ENCODE measurements at regions of chr20 and their contacts with region 1.

Region 1: GRCh38 chr20:32277361-32278198 is at the start of gene KIF3B:
- DNase-seq: peak; percentile 94
- H3K4me3 ChIP-seq: peak within 1 kb of the TSS; percentile 63 to 91 (median 74)
- H3K27ac ChIP-seq: peak within 1 kb of the TSS; percentile 75 to 83 (median 76)
- H3K4me1 ChIP-seq: peaks cover 0 to 16% (median 16%) of the 10 kb centered on the region in 4 donors
- H3K27me3 ChIP-seq: no peaks in the 10 kb centered on the region
- CTCF ChIP-seq: no peak
- EP300 ChIP-seq: peak in 1 of 4 donors; percentile 17
- POLR2A ChIP-seq: no peak
- total RNA-seq, gene KIF3B: 16.1 to 25.8 (median 18.6) TPM

Region 2: GRCh38 chr20:32189691-32190615 is 87.6 kb before region 1 on chr20:
- intact Hi-C with region 1: loop called (anchors 5 kb)
- DNase-seq: peak; percentile 76
- H3K4me3 ChIP-seq: peak overlapping the region; percentile 55 to 84 (median 64)
- H3K27ac ChIP-seq: peak overlapping the region; percentile 83 to 91 (median 84)
- H3K4me1 ChIP-seq: peaks cover 0 to 53% (median 23%) of the 10 kb centered on the region in 4 donors
- H3K27me3 ChIP-seq: no peaks in the 10 kb centered on the region
- CTCF ChIP-seq: no peak
- EP300 ChIP-seq: no peak
- POLR2A ChIP-seq: no peak

Region 3: DNA sequence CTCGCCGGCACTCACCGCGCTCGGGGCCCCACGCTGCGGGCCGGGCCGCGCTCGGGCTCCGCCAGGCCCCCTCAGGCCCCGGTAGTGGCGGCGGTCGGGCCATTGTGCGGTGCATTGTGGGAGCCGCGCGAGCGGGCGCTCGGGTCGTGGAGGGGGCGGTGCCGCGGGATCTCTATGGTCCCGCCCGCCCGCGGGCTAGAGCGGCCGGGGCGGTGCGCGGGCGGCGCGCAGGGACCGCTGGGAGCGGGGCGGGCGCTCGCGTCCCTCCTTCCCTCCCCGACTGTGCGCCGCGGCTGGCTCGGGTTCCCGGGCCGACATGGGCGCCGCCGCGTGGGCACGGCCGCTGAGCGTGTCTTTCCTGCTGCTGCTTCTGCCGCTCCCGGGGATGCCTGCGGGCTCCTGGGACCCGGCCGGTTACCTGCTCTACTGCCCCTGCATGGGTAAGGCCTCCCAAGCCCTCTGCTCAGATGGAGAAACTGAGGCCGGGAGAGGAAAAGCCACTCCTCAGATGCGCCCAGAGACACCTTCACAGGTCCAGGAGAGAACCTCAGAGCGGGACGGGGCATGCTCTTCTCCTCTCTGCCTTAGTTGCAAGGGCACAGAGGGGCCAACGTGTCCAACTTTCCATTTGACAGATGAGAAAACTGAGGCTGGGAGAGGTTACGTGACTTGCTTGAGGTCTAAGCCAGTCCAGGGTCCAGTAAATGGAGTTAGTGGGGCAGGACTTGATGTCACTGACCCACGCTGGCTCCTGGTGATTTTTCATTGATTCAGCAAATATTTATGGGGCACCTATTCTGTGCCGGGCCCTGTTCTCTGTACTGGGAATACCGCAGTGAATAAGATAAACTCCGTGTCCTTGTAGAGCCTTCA is 69.7 kb before region 1 on chr20 and contains the starts of genes PLAGL2 and POFUT1:
- intact Hi-C with region 1: loop called (anchors 5 kb)
- DNase-seq: peak; percentile 91
- H3K4me3 ChIP-seq: peak within 1 kb of the TSS; percentile 70 to 100 (median 91)
- H3K27ac ChIP-seq: peak within 1 kb of the TSS; percentile 75 to 93 (median 85)
- H3K4me1 ChIP-seq: peaks cover 0 to 58% (median 54%) of the 10 kb centered on the region in 4 donors
- H3K27me3 ChIP-seq: no peaks in the 10 kb centered on the region
- CTCF ChIP-seq: no peak
- EP300 ChIP-seq: no peak
- POLR2A ChIP-seq: peak in 1 of 2 donors; percentile 46
- total RNA-seq, gene PLAGL2: 3.3 to 5.6 (median 4.6) TPM
- total RNA-seq, gene POFUT1: 23.5 to 31.6 (median 27.8) TPM

Region 4: DNA sequence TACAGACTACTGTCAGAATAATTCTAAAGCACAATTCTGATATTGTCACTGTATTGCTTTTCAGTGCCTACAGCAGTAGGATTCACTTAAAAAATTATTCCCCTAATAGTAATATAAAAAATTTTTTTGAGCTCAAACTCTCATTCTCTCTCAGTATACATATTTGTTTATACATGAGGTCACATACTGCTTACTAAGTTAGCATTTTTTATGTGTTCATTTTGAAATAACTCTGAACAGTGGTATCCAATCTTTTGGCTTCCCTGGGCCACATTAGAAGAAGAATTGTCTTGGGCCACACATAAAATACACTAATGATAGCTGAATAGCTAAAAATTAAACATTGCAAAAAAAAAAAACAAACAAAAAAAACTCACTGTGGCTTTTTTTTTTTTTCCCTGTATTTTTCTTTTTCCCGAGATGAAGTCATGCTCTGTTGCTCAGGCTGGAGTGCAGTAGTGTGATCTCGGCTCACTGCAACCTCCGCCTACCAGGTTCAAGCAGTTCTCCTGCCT is 119.1 kb after region 1 on chr20:
- intact Hi-C with region 1: no loop called
- DNase-seq: no peak
- H3K4me3 ChIP-seq: no peak overlapping the region
- H3K27ac ChIP-seq: no peak overlapping the region
- H3K4me1 ChIP-seq: peaks cover 0 to 5% (median 2%) of the 10 kb centered on the region in 4 donors
- H3K27me3 ChIP-seq: no peaks in the 10 kb centered on the region
- CTCF ChIP-seq: no peak
- EP300 ChIP-seq: no peak
- POLR2A ChIP-seq: no peak

Region 5: GRCh38 chr20:32484958-32485769 is 207.6 kb after region 1 on chr20:
- intact Hi-C with region 1: loop called (anchors 5 kb)
- DNase-seq: peak; percentile 86
- H3K4me3 ChIP-seq: peak overlapping the region; percentile 74 to 97 (median 96)
- H3K27ac ChIP-seq: peak overlapping the region; percentile 85 to 97 (median 94)
- H3K4me1 ChIP-seq: peaks cover 0 to 40% (median 31%) of the 10 kb centered on the region in 4 donors
- H3K27me3 ChIP-seq: no peaks in the 10 kb centered on the region
- CTCF ChIP-seq: peak; percentile 70 to 90 (median 84)
- EP300 ChIP-seq: no peak
- POLR2A ChIP-seq: no peak

Measured in sigmoid colon (tissue), 7 donors.